ENCODE measurements at regions of chr1 and their contacts with region 1.

Region 1: DNA sequence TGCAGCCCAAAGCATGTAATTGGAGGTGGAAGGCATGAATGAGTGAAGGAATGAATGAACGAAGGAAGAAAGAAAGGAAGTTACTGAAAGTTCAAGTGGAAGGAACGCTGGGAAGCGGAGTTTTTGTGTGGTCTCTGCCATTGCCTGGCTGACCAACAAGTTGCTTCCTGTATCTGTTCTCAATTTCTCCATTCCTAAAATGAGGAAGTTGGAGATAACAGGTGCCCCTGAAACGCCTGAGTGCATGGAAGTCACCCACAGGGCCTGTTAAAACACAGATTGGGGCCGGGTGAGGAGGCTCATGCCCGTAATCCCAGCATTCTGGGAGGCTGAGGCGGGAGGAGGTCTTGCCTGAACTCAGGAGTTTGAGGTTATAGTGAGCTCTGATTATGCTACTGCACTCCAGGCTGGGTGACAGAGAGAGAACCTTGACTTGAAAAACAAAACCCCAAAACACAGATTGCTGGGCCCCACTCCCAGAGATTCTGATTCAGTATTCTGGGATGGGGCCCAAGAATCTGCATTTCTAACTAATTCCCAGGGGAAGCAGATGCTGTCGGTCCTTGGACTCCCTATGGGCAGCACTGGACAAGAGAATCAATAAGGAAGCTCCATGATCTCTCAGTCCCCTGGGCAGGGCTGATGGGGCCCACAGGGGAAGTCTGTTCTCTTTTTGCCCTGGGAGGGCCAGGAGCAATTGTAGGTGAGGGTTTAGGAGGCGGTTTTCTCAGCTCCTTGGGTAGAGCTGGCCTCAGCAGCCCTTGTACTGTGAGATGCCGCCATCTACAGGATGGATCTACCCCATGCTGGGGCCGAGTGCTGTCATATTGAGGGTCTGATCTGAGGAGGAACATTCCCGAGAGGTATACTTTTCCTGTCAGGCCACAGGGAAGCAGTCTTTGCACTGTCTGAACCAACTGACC is 3.3 kb upstream of the CNR2 start:
- DNase-seq: peak; percentile 72 to 87 (median 84)
- H3K4me3 ChIP-seq: peak overlapping the region in 1 of 3 experiments; percentile 58
- H3K4me3 Mint-ChIP-seq: peak overlapping the region; percentile 43 to 84
- H3K27ac ChIP-seq: peak overlapping the region; percentile 62 to 73
- H3K27ac Mint-ChIP-seq: peak overlapping the region; percentile 77 to 92 (median 88)
- H3K4me1 ChIP-seq: peaks cover 50 to 55% of the 10 kb centered on the region in 2 donors
- H3K4me1 Mint-ChIP-seq: peaks cover 56% of the 10 kb centered on the region
- H3K27me3 ChIP-seq: no peaks in the 10 kb centered on the region
- H3K27me3 Mint-ChIP-seq: no peaks in the 10 kb centered on the region
- CTCF ChIP-seq: peak; percentile 83

Region 2: GRCh38 chr1:23475134-23475628 is 441.3 kb before region 1 on chr1:
- intact Hi-C with region 1: no loop called
- DNase-seq: no peak
- H3K4me3 ChIP-seq: no peak overlapping the region
- H3K4me3 Mint-ChIP-seq: no peak overlapping the region
- H3K27ac ChIP-seq: no peak overlapping the region
- H3K27ac Mint-ChIP-seq: no peak overlapping the region
- H3K4me1 ChIP-seq: no peaks in the 10 kb centered on the region
- H3K4me1 Mint-ChIP-seq: no peaks in the 10 kb centered on the region
- H3K27me3 ChIP-seq: peaks cover 0 to 3% of the 10 kb centered on the region in 2 donors
- H3K27me3 Mint-ChIP-seq: peaks cover 9 to 13% (median 10%) of the 10 kb centered on the region in 3 donors
- CTCF ChIP-seq: no peak

Region 3: DNA sequence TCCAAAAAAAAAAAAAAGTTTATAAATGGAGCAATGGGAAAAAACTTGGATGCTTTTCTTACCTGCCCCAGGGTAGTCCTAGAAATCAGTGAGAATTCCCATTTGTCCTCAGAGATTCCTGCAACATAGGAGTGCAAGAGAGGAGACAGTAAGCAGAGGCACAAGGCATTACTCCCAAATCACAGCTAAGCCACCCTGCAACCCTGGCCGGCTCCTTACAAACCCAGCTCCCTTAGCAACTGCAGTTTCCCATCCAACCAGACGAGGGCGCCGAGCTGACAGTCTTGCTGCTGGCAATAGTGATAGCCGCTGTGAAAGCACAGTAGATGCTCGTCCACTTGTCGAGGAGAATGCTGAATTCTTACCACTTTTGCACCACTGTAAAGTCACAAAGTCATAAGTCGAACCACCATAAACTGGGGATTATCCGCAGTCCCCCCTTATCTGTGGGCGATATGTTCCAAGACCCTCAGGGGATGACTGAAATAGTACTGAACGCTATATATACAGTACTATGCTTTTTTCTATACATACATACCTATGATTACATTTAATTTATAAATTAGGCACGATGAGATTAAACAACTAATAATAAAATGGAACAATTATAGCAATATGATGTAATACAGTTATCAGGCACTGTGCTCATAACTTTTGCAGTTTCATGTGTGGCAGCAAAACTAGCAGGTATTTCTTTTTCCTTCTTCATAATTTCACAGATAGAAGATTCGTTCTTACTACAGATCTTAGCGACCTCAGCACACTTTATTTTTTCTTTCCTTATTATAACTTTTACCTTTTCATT is 144.2 kb before region 1 on chr1:
- intact Hi-C with region 1: loop called (anchors 2 to 5 kb)
- DNase-seq: peak; percentile 62 to 85 (median 75)
- H3K4me3 ChIP-seq: no peak overlapping the region
- H3K4me3 Mint-ChIP-seq: no peak overlapping the region
- H3K27ac ChIP-seq: no peak overlapping the region
- H3K27ac Mint-ChIP-seq: no peak overlapping the region
- H3K4me1 ChIP-seq: peaks cover under 1 to 5% of the 10 kb centered on the region in 2 donors
- H3K4me1 Mint-ChIP-seq: peaks cover 4% of the 10 kb centered on the region
- H3K27me3 ChIP-seq: no peaks in the 10 kb centered on the region
- H3K27me3 Mint-ChIP-seq: no peaks in the 10 kb centered on the region
- CTCF ChIP-seq: peak; percentile 88

Region 4: GRCh38 chr1:23800400-23801337 is 115.8 kb before region 1 on chr1 and contains the start of gene GALE:
- intact Hi-C with region 1: loop called in 1 of 2 experiments (anchors 10 kb)
- DNase-seq: peak; percentile 92 to 97 (median 95)
- H3K4me3 ChIP-seq: peak within 1 kb of the TSS; percentile 62 to 88 (median 85)
- H3K4me3 Mint-ChIP-seq: peak within 1 kb of the TSS; percentile 89 to 95
- H3K27ac ChIP-seq: peak within 1 kb of the TSS; percentile 67 to 97
- H3K27ac Mint-ChIP-seq: peak within 1 kb of the TSS; percentile 91 to 97 (median 93)
- H3K4me1 ChIP-seq: peaks cover 43 to 52% of the 10 kb centered on the region in 2 donors
- H3K4me1 Mint-ChIP-seq: peaks cover 48% of the 10 kb centered on the region
- H3K27me3 ChIP-seq: no peaks in the 10 kb centered on the region
- H3K27me3 Mint-ChIP-seq: peaks cover 0 to 3% (median 3%) of the 10 kb centered on the region in 3 donors
- CTCF ChIP-seq: no peak
- polyA plus RNA-seq, gene GALE: 17.6 to 21.9 (median 18.0) TPM

Region 5: DNA sequence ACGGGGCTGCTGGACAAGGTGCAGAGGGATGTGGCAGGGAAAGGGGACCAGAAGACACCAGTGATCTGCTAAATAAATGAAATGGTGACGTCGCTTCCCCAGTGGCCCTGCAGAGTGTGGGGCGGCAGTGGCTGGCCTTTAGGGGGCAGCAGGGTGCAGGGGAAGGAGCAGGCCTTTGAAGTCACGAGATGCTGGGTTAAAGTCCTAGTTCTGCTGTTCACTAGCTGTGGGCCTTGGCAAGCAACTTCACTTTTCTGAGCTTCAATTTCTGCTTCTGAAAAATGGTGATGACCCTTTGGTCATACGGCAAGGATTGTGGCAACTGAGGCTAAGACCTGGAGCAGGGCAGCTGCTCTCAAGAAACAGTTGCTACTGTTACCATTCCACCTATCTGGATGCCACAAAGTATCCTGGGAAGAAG is 106.7 kb before region 1 on chr1:
- intact Hi-C with region 1: loop called (anchors 2 to 10 kb)
- DNase-seq: peak; percentile 86 to 95 (median 91)
- H3K4me3 ChIP-seq: no peak overlapping the region
- H3K4me3 Mint-ChIP-seq: no peak overlapping the region
- H3K27ac ChIP-seq: peak overlapping the region; percentile 53 to 83
- H3K27ac Mint-ChIP-seq: peak overlapping the region; percentile 84 to 96 (median 92)
- H3K4me1 ChIP-seq: peaks cover 53 to 57% of the 10 kb centered on the region in 2 donors
- H3K4me1 Mint-ChIP-seq: peaks cover 57% of the 10 kb centered on the region
- H3K27me3 ChIP-seq: no peaks in the 10 kb centered on the region
- H3K27me3 Mint-ChIP-seq: peaks cover 0 to 3% (median 0%) of the 10 kb centered on the region in 3 donors
- CTCF ChIP-seq: peak; percentile 78

Region 6: GRCh38 chr1:23825076-23825761 is 91.3 kb before region 1 on chr1 and contains the start of gene HMGCL:
- intact Hi-C with region 1: no loop called
- DNase-seq: peak; percentile 88 to 92 (median 90)
- H3K4me3 ChIP-seq: peak within 1 kb of the TSS; percentile 83 to 90 (median 87)
- H3K4me3 Mint-ChIP-seq: peak within 1 kb of the TSS; percentile 92 to 98
- H3K27ac ChIP-seq: peak within 1 kb of the TSS; percentile 84 to 99
- H3K27ac Mint-ChIP-seq: peak within 1 kb of the TSS; percentile 95 to 99 (median 97)
- H3K4me1 ChIP-seq: peaks cover 10 to 19% of the 10 kb centered on the region in 2 donors
- H3K4me1 Mint-ChIP-seq: peaks cover 22% of the 10 kb centered on the region
- H3K27me3 ChIP-seq: no peaks in the 10 kb centered on the region
- H3K27me3 Mint-ChIP-seq: peaks cover 0 to 2% (median 0%) of the 10 kb centered on the region in 3 donors
- CTCF ChIP-seq: no peak
- polyA plus RNA-seq, gene HMGCL: 17.8 to 26.7 (median 22.1) TPM

Region 7: GRCh38 chr1:23838401-23838866 is 78.0 kb before region 1 on chr1:
- intact Hi-C with region 1: no loop called
- DNase-seq: peak; percentile 77 to 93 (median 84)
- H3K4me3 ChIP-seq: peak overlapping the region; percentile 13 to 66 (median 29)
- H3K4me3 Mint-ChIP-seq: peak overlapping the region; percentile 70 to 80
- H3K27ac ChIP-seq: peak overlapping the region in 1 of 2 donors; percentile 79
- H3K27ac Mint-ChIP-seq: peak overlapping the region in 5 of 7 donors; percentile 10 to 86 (median 28)
- H3K4me1 ChIP-seq: peaks cover 26% of the 10 kb centered on the region in 2 donors
- H3K4me1 Mint-ChIP-seq: peaks cover 29% of the 10 kb centered on the region
- H3K27me3 ChIP-seq: no peaks in the 10 kb centered on the region
- H3K27me3 Mint-ChIP-seq: peaks cover 0 to 5% (median 0%) of the 10 kb centered on the region in 3 donors
- CTCF ChIP-seq: no peak

Region 8: DNA sequence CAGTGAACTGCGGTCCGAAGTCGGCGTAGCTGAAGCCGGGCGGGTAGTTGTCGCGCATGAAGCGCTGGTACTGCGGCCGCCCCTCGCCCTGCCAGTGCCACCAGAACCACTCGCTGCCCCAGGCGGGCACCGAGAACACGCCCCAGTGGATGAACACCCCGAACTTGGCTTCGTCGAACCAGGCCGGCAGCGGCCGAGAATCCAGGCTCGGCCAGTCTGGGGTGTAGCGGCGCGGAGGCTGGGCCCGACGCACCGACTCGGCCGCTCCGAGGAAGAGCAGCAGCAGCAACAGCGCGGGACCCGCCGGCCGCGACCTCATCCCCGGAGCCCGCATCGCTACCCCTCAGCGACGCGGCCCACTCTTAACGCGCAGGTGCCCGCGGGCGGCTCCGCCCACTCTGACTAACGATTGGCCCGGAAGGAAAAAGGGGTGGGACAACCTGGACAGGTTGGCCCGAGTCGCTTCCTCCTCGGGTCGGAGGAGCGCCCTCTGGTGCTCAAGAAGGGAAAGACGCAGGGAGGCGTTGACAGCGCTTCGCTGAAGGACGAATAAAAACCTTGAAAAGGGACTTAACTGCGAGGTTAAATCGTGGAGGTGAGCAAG is 48.4 kb before region 1 on chr1 and contains the start of gene FUCA1:
- intact Hi-C with region 1: loop called (anchors 2 to 5 kb)
- DNase-seq: peak; percentile 88 to 91 (median 91)
- H3K4me3 ChIP-seq: peak within 1 kb of the TSS; percentile 54 to 82 (median 70)
- H3K4me3 Mint-ChIP-seq: peak within 1 kb of the TSS; percentile 84 to 93
- H3K27ac ChIP-seq: peak within 1 kb of the TSS; percentile 69 to 84
- H3K27ac Mint-ChIP-seq: peak within 1 kb of the TSS; percentile 83 to 91 (median 88)
- H3K4me1 ChIP-seq: peaks cover 51 to 56% of the 10 kb centered on the region in 2 donors
- H3K4me1 Mint-ChIP-seq: peaks cover 56% of the 10 kb centered on the region
- H3K27me3 ChIP-seq: no peaks in the 10 kb centered on the region
- H3K27me3 Mint-ChIP-seq: peaks cover 0 to 13% (median 2%) of the 10 kb centered on the region in 3 donors
- CTCF ChIP-seq: peak; percentile 94
- polyA plus RNA-seq, gene FUCA1: 24.2 to 97.7 (median 96.6) TPM

Region 9: GRCh38 chr1:23959041-23959460 is 42.6 kb after region 1 on chr1:
- intact Hi-C with region 1: loop called in 1 of 2 experiments (anchors 5 kb)
- DNase-seq: peak; percentile 95 to 96 (median 95)
- H3K4me3 ChIP-seq: peak overlapping the region; percentile 86 to 99 (median 91)
- H3K4me3 Mint-ChIP-seq: peak overlapping the region; percentile 83 to 99
- H3K27ac ChIP-seq: peak overlapping the region; percentile 96 to 100
- H3K27ac Mint-ChIP-seq: peak overlapping the region; percentile 99 to 100 (median 99)
- H3K4me1 ChIP-seq: peaks cover 40 to 59% of the 10 kb centered on the region in 2 donors
- H3K4me1 Mint-ChIP-seq: peaks cover 54% of the 10 kb centered on the region
- H3K27me3 ChIP-seq: no peaks in the 10 kb centered on the region
- H3K27me3 Mint-ChIP-seq: no peaks in the 10 kb centered on the region
- CTCF ChIP-seq: no peak

Region 10: DNA sequence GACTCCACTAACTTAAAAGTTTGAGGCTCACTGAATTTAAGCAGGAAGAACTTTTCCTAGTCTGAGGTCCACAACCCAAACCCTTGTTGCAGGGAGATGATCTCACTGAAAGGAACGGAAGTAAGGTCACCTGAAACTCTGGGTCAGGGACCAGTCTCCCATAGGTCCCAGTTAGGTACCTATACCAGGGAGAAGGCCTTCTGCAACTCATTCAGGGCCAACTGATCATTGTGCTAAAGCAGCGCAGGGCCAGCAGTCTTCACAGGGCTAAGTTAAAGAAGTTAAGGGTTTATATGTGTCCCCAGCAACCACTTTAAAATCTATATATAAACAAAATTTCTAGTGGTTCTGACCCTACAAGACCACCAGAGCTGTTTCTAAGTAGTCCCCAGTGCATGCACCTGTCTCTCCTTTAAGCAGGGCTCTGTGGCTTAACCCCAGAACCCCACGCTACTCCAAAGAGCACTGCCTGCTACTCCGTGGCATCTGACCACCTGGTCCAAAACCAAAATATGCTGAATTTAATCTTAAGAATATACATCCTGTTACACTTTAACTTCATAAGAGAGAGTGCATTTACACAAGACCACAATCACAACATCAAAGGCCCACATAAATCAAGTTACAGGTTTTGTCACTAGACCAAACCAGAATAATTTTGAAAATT is 60.9 kb after region 1 on chr1:
- intact Hi-C with region 1: no loop called
- DNase-seq: no peak
- H3K4me3 ChIP-seq: no peak overlapping the region
- H3K4me3 Mint-ChIP-seq: no peak overlapping the region
- H3K27ac ChIP-seq: peak overlapping the region in 1 of 2 donors; percentile 9
- H3K27ac Mint-ChIP-seq: peak overlapping the region in 2 of 7 donors; percentile 66 to 73
- H3K4me1 ChIP-seq: peaks cover 25 to 39% of the 10 kb centered on the region in 2 donors
- H3K4me1 Mint-ChIP-seq: peaks cover 40% of the 10 kb centered on the region
- H3K27me3 ChIP-seq: no peaks in the 10 kb centered on the region
- H3K27me3 Mint-ChIP-seq: peaks cover 0 to 2% (median 0%) of the 10 kb centered on the region in 3 donors
- CTCF ChIP-seq: no peak